Panc1 (cell line): ENCODE measurements at regions of chr21 and their contacts with region 1.

Region 1: GRCh38 chr21:31991356-31992331 is 118.8 kb downstream of the HUNK start:
- DNase-seq: no peak
- ATAC-seq: no peak
- H3K4me3 ChIP-seq: no peak overlapping the region
- H3K27ac ChIP-seq: no peak overlapping the region
- H3K4me1 ChIP-seq: no peaks in the 10 kb centered on the region
- H3K27me3 ChIP-seq: no peaks in the 10 kb centered on the region; the same call in 1 of the 2 replicates
- CTCF ChIP-seq: no peak

Region 2: GRCh38 chr21:31901315-31901714 is 90.3 kb before region 1 on chr21:
- CTCF ChIA-PET with region 1: no interaction called
- POLR2A ChIA-PET with region 1: interaction called, 10 read pairs
- in situ Hi-C with region 1: no loop called
- intact Hi-C with region 1: no loop called
- DNase-seq: no peak
- ATAC-seq: no peak
- H3K4me3 ChIP-seq: no peak overlapping the region
- H3K27ac ChIP-seq: no peak overlapping the region
- H3K4me1 ChIP-seq: no peaks in the 10 kb centered on the region
- H3K27me3 ChIP-seq: no peaks in the 10 kb centered on the region
- CTCF ChIP-seq: no peak

Region 3: DNA sequence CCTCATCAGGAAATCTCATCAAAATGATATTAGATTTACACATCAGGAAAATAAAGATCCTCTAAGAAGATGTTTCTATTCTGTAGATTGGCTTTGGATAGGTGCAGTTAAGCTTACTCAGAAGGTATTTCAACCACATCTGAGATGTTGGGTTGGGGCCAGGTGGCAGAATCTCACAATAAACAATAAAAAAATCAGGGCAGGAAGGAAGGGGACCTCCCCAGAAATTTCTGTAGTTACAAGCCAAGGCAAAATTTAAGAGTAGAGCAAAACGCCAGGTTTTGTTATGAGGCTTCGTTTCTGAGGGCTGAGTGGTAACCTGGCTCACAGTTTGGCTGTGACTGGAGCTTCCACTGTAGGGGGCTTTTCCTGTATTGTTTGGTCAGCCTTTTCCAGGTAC is 34.0 kb before region 1 on chr21:
- CTCF ChIA-PET with region 1: no interaction called
- POLR2A ChIA-PET with region 1: no interaction called
- in situ Hi-C with region 1: no loop called
- intact Hi-C with region 1: no loop called
- DNase-seq: no peak
- ATAC-seq: no peak
- H3K4me3 ChIP-seq: no peak overlapping the region
- H3K27ac ChIP-seq: no peak overlapping the region
- H3K4me1 ChIP-seq: no peaks in the 10 kb centered on the region
- H3K27me3 ChIP-seq: no peaks in the 10 kb centered on the region; the same call in 1 of the 2 replicates
- CTCF ChIP-seq: no peak

Region 4: GRCh38 chr21:32538147-32538792 is 546.6 kb after region 1 on chr21:
- CTCF ChIA-PET with region 1: interaction called, 13 read pairs
- POLR2A ChIA-PET with region 1: no interaction called
- in situ Hi-C with region 1: no loop called
- intact Hi-C with region 1: no loop called
- DNase-seq: no peak
- ATAC-seq: no peak
- H3K4me3 ChIP-seq: no peak overlapping the region
- H3K27ac ChIP-seq: no peak overlapping the region
- H3K4me1 ChIP-seq: no peaks in the 10 kb centered on the region
- H3K27me3 ChIP-seq: no peaks in the 10 kb centered on the region
- CTCF ChIP-seq: no peak